PC-3 (cell line): ENCODE measurements at regions of chr1 and their contacts with region 1.

Region 1: GRCh38 chr1:246450611-246451251 is 56.3 kb downstream of the SMYD3 start:
- DNase-seq: peak; percentile 52
- ATAC-seq: peak; percentile 39; the same call in 1 of the 2 replicates
- H3K4me3 ChIP-seq: no peak overlapping the region
- H3K27ac ChIP-seq: no peak overlapping the region
- H3K4me1 ChIP-seq: no peaks in the 10 kb centered on the region
- H3K27me3 ChIP-seq: no peaks in the 10 kb centered on the region
- CTCF ChIP-seq: peak; percentile 94

Region 2: GRCh38 chr1:246012341-246012740 is 438.4 kb before region 1 on chr1:
- CTCF ChIA-PET with region 1: no interaction called
- POLR2A ChIA-PET with region 1: no interaction called
- intact Hi-C with region 1: loop called (anchors 1 kb)
- DNase-seq: peak; percentile 66
- ATAC-seq: peak; percentile 49
- H3K4me3 ChIP-seq: no peak overlapping the region
- H3K27ac ChIP-seq: no peak overlapping the region
- H3K4me1 ChIP-seq: no peaks in the 10 kb centered on the region
- H3K27me3 ChIP-seq: no peaks in the 10 kb centered on the region
- CTCF ChIP-seq: peak; percentile 85

Region 3: DNA sequence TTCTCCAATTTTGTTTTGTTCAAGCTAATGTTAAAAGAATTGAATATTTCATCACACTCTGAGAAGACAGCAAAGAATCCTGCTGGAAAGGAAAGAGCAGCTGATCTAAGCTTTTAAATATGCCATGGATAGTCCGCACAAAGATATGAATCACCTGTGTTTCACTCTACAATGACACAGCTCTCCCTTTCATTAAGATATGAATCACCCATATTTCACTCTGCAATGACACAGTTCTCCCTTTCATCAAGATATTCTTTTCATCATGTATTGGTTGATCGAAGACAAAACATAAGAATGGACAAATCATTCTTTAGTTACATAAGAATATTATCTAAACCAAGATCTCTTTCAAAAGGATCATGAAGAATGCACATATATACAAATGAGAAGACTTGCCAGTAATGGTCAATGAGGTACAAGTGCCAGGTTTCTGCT is 311.0 kb before region 1 on chr1:
- CTCF ChIA-PET with region 1: no interaction called
- POLR2A ChIA-PET with region 1: no interaction called
- intact Hi-C with region 1: loop called (anchors 10 kb)
- DNase-seq: peak; percentile 97
- ATAC-seq: peak; percentile 78
- H3K4me3 ChIP-seq: peak overlapping the region; percentile 21; the same call in 1 of the 2 replicates
- H3K27ac ChIP-seq: peak overlapping the region; percentile 96
- H3K4me1 ChIP-seq: peaks cover 52% of the 10 kb centered on the region
- H3K27me3 ChIP-seq: no peaks in the 10 kb centered on the region
- CTCF ChIP-seq: no peak

Region 4: GRCh38 chr1:246280551-246280950 is 170.2 kb before region 1 on chr1:
- CTCF ChIA-PET with region 1: no interaction called
- POLR2A ChIA-PET with region 1: no interaction called
- intact Hi-C with region 1: loop called (anchors 2 kb)
- DNase-seq: peak; percentile 44
- ATAC-seq: peak; percentile 17; the same call in 1 of the 2 replicates
- H3K4me3 ChIP-seq: no peak overlapping the region
- H3K27ac ChIP-seq: peak overlapping the region; percentile 54
- H3K4me1 ChIP-seq: peaks cover 23% of the 10 kb centered on the region
- H3K27me3 ChIP-seq: no peaks in the 10 kb centered on the region
- CTCF ChIP-seq: peak; percentile 67

Region 5: DNA sequence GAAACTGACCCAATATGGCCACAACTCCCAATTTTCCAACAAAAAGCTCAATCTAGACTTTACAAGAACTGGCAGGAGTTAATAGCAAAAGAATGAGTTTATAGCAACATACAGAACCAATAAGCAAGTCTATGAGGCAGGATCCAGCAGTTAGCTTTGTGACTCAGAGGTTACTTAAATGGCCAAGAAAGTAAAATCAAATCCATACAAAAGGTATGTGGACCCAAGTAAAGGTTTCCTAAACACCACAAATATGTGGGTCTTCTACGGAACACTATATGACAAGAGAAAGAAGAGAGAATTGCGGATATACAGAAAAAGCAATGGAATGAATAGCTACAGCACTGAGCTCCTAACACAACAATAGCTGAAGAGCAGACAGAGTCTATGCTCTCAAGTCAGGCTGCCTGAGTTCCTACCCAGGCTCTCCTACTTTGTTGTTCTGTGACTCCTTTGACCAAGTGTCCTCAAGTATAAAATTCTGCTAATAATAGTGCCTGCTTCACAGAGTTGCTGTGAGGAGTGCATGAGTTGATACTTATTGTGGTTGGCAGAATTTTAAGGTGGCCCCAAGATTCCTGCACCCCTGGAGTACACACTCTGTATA is 147.9 kb before region 1 on chr1:
- CTCF ChIA-PET with region 1: no interaction called
- POLR2A ChIA-PET with region 1: no interaction called
- intact Hi-C with region 1: loop called (anchors 5 kb)
- DNase-seq: peak; percentile 32
- ATAC-seq: peak; percentile 79
- H3K4me3 ChIP-seq: no peak overlapping the region
- H3K27ac ChIP-seq: no peak overlapping the region
- H3K4me1 ChIP-seq: peaks cover 12% of the 10 kb centered on the region
- H3K27me3 ChIP-seq: no peaks in the 10 kb centered on the region
- CTCF ChIP-seq: no peak

Region 6: GRCh38 chr1:246632281-246633087 is 181.8 kb after region 1 on chr1:
- CTCF ChIA-PET with region 1: no interaction called
- POLR2A ChIA-PET with region 1: no interaction called
- intact Hi-C with region 1: no loop called
- DNase-seq: no peak
- ATAC-seq: no peak
- H3K4me3 ChIP-seq: no peak overlapping the region
- H3K27ac ChIP-seq: no peak overlapping the region
- H3K4me1 ChIP-seq: no peaks in the 10 kb centered on the region
- H3K27me3 ChIP-seq: no peaks in the 10 kb centered on the region
- CTCF ChIP-seq: no peak